Left cardiac atrium (tissue), 4 donors: ENCODE measurements at regions of chrX and their contacts with region 1.

Region 1: GRCh38 chrX:54639346-54640102 is 109.5 kb downstream of the GNL3L start:
- DNase-seq: peak; percentile 97
- ATAC-seq: peak; percentile 97 to 99

Region 2: DNA sequence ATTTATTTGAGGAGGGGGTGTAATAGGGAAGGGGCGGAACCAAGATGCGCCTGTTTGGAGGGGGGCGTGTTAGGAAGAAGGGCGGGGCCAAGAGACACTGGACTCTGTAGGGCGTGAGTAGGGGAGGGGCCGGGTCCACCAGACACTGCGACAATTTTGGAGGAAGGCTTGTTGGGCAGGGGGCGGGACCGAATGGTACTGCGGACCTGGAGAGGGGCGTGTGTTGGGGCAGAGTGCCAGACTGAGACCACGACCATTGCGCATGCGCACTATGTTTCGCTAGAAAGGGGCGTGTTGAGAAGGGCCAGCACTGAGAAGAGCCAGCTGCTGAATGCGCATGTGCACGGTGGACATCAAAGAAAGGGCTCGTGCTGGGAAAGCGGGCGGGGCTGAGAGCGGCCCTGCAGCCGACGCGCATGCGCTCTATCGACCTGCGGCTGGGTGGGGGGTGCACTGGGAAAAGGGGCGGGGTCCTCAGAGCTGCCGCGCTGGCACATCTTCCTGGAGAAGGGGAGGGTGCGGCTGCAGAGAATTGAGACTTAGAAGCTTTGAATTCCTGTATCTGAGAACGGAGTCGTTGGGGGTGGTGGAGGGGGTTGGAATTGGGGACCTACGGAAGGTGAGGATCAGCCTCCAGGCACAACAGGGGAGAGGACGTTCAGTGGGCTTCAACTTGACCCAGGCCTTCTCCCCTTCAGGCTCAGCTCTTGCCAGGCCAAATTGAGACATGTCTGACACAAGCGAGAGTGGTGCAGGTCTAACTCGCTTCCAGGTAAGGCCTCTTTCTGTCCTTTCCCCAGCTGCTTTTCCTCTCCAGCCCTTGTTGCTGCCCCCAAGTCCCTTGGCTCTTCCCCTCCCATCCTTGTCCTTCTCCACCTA is 169.3 kb after region 1 on chrX:
- intact Hi-C with region 1: loop called in 1 of 2 experiments (anchors 10 kb)
- DNase-seq: peak; percentile 93
- ATAC-seq: peak; percentile 91 to 94